Gastrocnemius medialis (tissue), 4 donors: ENCODE measurements at regions of chr4 and their contacts with region 1.

Region 1: GRCh38 chr4:128287871-128288688 is 467 bp upstream of the PGRMC2 start:
- DNase-seq: peak; percentile 98 to 99
- ATAC-seq: peak; percentile 86 to 89
- H3K4me3 ChIP-seq: peak overlapping the region; percentile 81 to 98 (median 92)
- H3K27ac ChIP-seq: peak overlapping the region; percentile 90 to 100 (median 96)
- H3K4me1 ChIP-seq: peaks cover 28 to 30% of the 10 kb centered on the region in 2 donors
- H3K27me3 ChIP-seq: no peaks in the 10 kb centered on the region
- CTCF ChIP-seq: peak; percentile 46 to 61 (median 56)
- POLR2A ChIP-seq: peak; percentile 71 to 83

Region 2: GRCh38 chr4:127965062-127965802 is 322.8 kb before region 1 on chr4 and contains the starts of genes ABHD18 and MFSD8:
- in situ Hi-C with region 1: no loop called
- intact Hi-C with region 1: loop called (anchors 5 kb)
- DNase-seq: peak; percentile 98 to 99
- ATAC-seq: peak; percentile 97 to 98
- H3K4me3 ChIP-seq: peak within 1 kb of the TSS; percentile 78 to 93 (median 86)
- H3K27ac ChIP-seq: peak within 1 kb of the TSS; percentile 95 to 99 (median 97)
- H3K4me1 ChIP-seq: peaks cover 8 to 18% of the 10 kb centered on the region in 2 donors
- H3K27me3 ChIP-seq: no peaks in the 10 kb centered on the region
- CTCF ChIP-seq: peak; percentile 60 to 70 (median 69)
- POLR2A ChIP-seq: peak; percentile 80 to 87
- total RNA-seq, gene ABHD18: 3.9 to 7.8 (median 5.8) TPM
- total RNA-seq, gene MFSD8: 5.6 to 13.2 (median 7.5) TPM

Region 3: GRCh38 chr4:128141866-128142265 is 146.2 kb before region 1 on chr4:
- in situ Hi-C with region 1: no loop called
- intact Hi-C with region 1: no loop called
- DNase-seq: no peak
- ATAC-seq: no peak
- H3K4me3 ChIP-seq: no peak overlapping the region
- H3K27ac ChIP-seq: no peak overlapping the region
- H3K4me1 ChIP-seq: no peaks in the 10 kb centered on the region
- H3K27me3 ChIP-seq: no peaks in the 10 kb centered on the region
- CTCF ChIP-seq: no peak
- POLR2A ChIP-seq: no peak

Region 4: GRCh38 chr4:128227991-128228571 is 60.0 kb before region 1 on chr4:
- in situ Hi-C with region 1: no loop called
- intact Hi-C with region 1: no loop called
- DNase-seq: no peak
- ATAC-seq: peak in 1 of 2 donors; percentile 39
- H3K4me3 ChIP-seq: no peak overlapping the region
- H3K27ac ChIP-seq: no peak overlapping the region
- H3K4me1 ChIP-seq: peaks cover 0 to 6% of the 10 kb centered on the region in 2 donors
- H3K27me3 ChIP-seq: no peaks in the 10 kb centered on the region
- CTCF ChIP-seq: no peak
- POLR2A ChIP-seq: no peak

Region 5: GRCh38 chr4:128342762-128343161 is 54.7 kb after region 1 on chr4:
- in situ Hi-C with region 1: no loop called
- intact Hi-C with region 1: no loop called
- DNase-seq: no peak
- ATAC-seq: no peak
- H3K4me3 ChIP-seq: no peak overlapping the region
- H3K27ac ChIP-seq: no peak overlapping the region
- H3K4me1 ChIP-seq: peaks cover 7% of the 10 kb centered on the region in 2 donors
- H3K27me3 ChIP-seq: no peaks in the 10 kb centered on the region
- CTCF ChIP-seq: no peak
- POLR2A ChIP-seq: no peak

Region 6: GRCh38 chr4:128355301-128355700 is 67.2 kb after region 1 on chr4:
- in situ Hi-C with region 1: no loop called
- intact Hi-C with region 1: loop called (anchors 5 kb)
- DNase-seq: no peak
- ATAC-seq: no peak
- H3K4me3 ChIP-seq: no peak overlapping the region
- H3K27ac ChIP-seq: peak overlapping the region in 2 of 4 donors; percentile 29 to 30
- H3K4me1 ChIP-seq: peaks cover 20 to 22% of the 10 kb centered on the region in 2 donors
- H3K27me3 ChIP-seq: no peaks in the 10 kb centered on the region
- CTCF ChIP-seq: no peak
- POLR2A ChIP-seq: no peak

Region 7: DNA sequence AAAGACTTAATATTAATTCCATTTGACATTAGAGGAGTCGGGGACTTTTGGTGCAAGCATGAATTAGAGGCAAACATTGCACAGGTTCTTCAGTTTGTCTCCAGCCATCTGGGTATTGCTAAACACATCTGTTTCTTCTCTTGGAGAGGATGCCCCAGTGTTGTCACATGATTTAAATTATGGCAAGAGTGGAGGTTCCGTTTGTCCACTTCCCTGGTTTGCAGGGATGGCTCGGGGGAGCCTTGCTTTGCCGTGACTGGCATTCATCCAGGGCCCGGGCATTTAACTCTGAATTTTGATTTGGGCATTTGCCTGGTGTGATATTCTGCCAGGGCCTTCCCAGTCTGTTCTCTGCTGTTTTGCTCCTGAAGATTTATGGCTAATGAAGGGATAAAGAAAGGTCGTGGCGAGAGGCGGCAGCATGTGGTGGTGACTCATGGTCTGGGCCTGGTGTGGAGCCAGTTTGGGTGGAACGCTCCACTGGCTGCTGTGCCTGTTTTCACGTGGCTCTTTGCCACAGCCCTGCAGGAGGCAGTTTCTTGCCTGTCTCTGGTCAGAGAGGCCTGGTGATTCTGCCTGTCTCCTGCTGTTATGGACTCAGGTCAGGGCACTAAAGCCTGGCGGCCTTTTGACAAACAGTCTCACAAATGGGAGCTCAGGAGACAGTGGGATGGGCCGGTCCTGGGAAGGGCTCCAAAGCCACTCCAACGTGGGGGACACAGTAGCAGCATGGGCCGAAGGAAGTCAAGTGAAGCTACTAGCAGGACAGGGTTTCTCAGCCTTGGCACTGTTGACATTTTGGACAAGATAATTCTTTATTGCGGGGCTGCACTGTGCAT is 98.9 kb after region 1 on chr4:
- in situ Hi-C with region 1: no loop called
- intact Hi-C with region 1: loop called (anchors 2 kb)
- DNase-seq: peak; percentile 93 to 97
- ATAC-seq: peak; percentile 92
- H3K4me3 ChIP-seq: peak overlapping the region; percentile 11 to 35 (median 32)
- H3K27ac ChIP-seq: peak overlapping the region; percentile 90 to 92 (median 91)
- H3K4me1 ChIP-seq: peaks cover 32 to 46% of the 10 kb centered on the region in 2 donors
- H3K27me3 ChIP-seq: no peaks in the 10 kb centered on the region
- CTCF ChIP-seq: no peak
- POLR2A ChIP-seq: no peak

Region 8: DNA sequence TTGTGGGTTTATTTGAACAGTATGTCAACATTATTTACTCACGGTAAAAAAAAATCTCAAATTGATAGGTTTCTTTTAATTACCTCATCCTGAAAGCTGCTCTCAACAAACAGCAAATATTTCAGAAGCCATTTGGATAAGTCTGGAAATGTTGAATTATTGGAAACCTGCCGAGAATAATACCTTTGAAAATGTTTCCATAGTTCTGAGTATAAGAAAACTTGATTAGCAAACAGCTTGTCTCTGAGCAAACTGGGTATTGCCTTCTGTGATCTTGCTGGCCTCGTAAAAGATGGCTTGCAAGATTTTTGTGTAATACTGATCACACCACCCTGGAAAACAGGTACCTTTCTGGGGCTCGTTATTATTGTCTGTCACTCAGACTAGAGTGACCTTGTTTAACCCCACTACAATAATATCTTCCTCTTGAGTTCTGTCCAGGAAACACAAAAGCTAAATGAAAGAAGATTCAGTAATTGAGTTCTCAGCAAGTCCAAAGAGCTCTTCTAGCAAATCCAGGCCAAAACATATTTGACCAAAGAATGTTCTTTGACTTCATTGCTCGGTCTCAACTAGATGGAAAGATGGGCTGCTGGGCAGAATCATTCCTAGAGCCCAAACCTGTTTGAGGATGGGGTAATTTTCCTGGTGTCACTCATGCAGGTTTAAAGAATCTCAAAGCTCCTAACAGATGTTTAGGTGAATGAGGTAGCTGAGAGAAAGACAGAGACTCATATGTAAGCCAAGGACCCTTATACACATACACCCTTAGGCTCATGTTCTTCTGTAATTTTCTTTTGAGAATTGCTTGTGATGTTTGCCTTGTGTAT is 265.8 kb after region 1 on chr4:
- in situ Hi-C with region 1: no loop called
- intact Hi-C with region 1: loop called (anchors 2 kb)
- DNase-seq: no peak
- ATAC-seq: peak in 1 of 2 donors; percentile 15
- H3K4me3 ChIP-seq: peak overlapping the region; percentile 59 to 83 (median 71)
- H3K27ac ChIP-seq: peak overlapping the region; percentile 88 to 97 (median 96)
- H3K4me1 ChIP-seq: peaks cover 11 to 13% of the 10 kb centered on the region in 2 donors
- H3K27me3 ChIP-seq: no peaks in the 10 kb centered on the region
- CTCF ChIP-seq: no peak
- POLR2A ChIP-seq: no peak

Region 9: GRCh38 chr4:128688846-128689467 is 400.9 kb after region 1 on chr4:
- in situ Hi-C with region 1: no loop called
- intact Hi-C with region 1: no loop called
- DNase-seq: no peak
- ATAC-seq: no peak
- H3K4me3 ChIP-seq: no peak overlapping the region
- H3K27ac ChIP-seq: no peak overlapping the region
- H3K4me1 ChIP-seq: no peaks in the 10 kb centered on the region
- H3K27me3 ChIP-seq: no peaks in the 10 kb centered on the region
- CTCF ChIP-seq: no peak
- POLR2A ChIP-seq: no peak

Region 10: DNA sequence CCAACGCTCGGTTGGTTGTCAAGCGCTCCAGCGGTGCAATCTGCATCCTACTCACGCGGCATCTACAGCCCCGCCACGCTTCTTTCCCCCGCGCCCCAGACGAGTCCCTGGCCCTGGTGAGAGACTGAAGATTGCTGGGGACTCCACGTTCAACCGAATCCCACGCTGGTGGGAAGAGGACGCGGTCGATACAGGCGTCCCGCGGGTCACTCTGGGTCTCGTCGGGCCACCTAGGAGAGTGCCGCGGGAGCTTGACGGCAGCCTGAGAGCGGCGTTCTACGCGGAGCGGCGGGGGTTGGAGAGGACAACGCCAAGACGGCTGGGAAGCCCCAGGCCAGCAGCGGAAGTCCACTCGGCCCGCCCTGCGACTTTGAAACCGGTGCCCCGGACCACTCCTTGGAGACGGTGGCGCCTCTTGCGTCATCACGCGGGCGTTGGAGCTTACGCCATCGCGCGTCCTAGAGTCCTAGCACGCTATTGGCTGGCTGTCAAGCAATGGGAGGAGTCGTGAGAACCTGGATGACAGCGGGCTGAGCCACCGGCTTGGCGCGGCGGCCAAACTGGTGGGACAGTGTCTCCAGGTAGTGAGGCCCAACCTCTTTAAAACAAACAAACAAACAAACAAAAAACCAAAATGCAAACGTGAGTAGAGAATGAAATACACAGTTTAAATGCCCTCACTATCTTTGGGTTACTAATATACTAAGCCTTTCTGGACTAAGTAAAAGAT is 805.3 kb after region 1 on chr4 and contains the start of gene SCLT1:
- in situ Hi-C with region 1: no loop called
- intact Hi-C with region 1: loop called (anchors 5 kb)
- DNase-seq: peak; percentile 98 to 99
- ATAC-seq: peak; percentile 99
- H3K4me3 ChIP-seq: peak within 1 kb of the TSS; percentile 78 to 89 (median 84)
- H3K27ac ChIP-seq: peak within 1 kb of the TSS; percentile 90 to 94 (median 94)
- H3K4me1 ChIP-seq: peaks cover 18 to 19% of the 10 kb centered on the region in 2 donors
- H3K27me3 ChIP-seq: no peaks in the 10 kb centered on the region
- CTCF ChIP-seq: peak in 1 of 5 experiments; percentile 13
- POLR2A ChIP-seq: peak; percentile 65 to 87
- total RNA-seq, gene SCLT1: 1.0 to 4.1 (median 1.8) TPM